CD8-positive, alpha-beta T cell (primary cell): ENCODE measurements at regions of chr15 and their contacts with region 1.

Region 1: GRCh38 chr15:50765195-50765973 is at the start of gene SPPL2A:
- DNase-seq: peak; percentile 50 to 90 (median 76)
- ATAC-seq: peak; percentile 91
- H3K4me3 ChIP-seq: peak within 1 kb of the TSS; percentile 69 to 77
- H3K4me3 Mint-ChIP-seq: peak within 1 kb of the TSS; percentile 90
- H3K27ac ChIP-seq: peak within 1 kb of the TSS; percentile 63 to 90
- H3K27ac Mint-ChIP-seq: peak within 1 kb of the TSS; percentile 92
- H3K4me1 ChIP-seq: peaks cover 20% of the 10 kb centered on the region
- H3K4me1 Mint-ChIP-seq: peaks cover 45% of the 10 kb centered on the region
- H3K27me3 ChIP-seq: no peaks in the 10 kb centered on the region
- H3K27me3 Mint-ChIP-seq: no peaks in the 10 kb centered on the region
- CTCF ChIP-seq: no peak
- total RNA-seq, gene SPPL2A: 33.4 to 36.8 TPM

Region 2: GRCh38 chr15:49927189-49927868 is 838.1 kb before region 1 on chr15:
- CTCF ChIA-PET with region 1: no interaction called
- POLR2A ChIA-PET with region 1: no interaction called
- intact Hi-C with region 1: no loop called
- DNase-seq: no peak
- ATAC-seq: no peak
- H3K4me3 ChIP-seq: no peak overlapping the region
- H3K4me3 Mint-ChIP-seq: no peak overlapping the region
- H3K27ac ChIP-seq: no peak overlapping the region
- H3K27ac Mint-ChIP-seq: no peak overlapping the region
- H3K4me1 ChIP-seq: no peaks in the 10 kb centered on the region
- H3K4me1 Mint-ChIP-seq: no peaks in the 10 kb centered on the region
- H3K27me3 ChIP-seq: no peaks in the 10 kb centered on the region
- H3K27me3 Mint-ChIP-seq: no peaks in the 10 kb centered on the region
- CTCF ChIP-seq: no peak

Region 3: DNA sequence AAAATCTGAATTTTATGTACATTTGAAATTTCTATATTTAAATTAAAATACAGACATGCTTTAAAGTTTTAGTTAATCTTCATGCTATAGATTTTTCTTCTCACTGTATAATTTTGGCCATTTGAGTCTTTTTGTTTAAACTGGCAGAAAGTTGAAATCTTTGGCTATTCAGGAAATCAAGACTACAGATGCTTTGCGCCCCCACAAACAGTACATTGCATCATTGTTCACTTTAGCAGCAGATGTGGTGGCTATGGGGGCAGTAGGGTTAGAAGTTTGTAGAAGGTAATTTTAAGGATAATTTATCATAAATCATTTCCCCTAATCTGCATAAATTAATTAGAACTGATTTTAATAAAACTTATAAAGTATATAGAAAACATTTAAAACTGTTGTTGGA is 20.8 kb before region 1 on chr15:
- CTCF ChIA-PET with region 1: interaction called, 3 read pairs
- POLR2A ChIA-PET with region 1: no interaction called
- intact Hi-C with region 1: loop called in 1 of 2 experiments (anchors 1 kb)
- DNase-seq: no peak
- ATAC-seq: no peak
- H3K4me3 ChIP-seq: no peak overlapping the region
- H3K4me3 Mint-ChIP-seq: no peak overlapping the region
- H3K27ac ChIP-seq: no peak overlapping the region
- H3K27ac Mint-ChIP-seq: no peak overlapping the region
- H3K4me1 ChIP-seq: no peaks in the 10 kb centered on the region
- H3K4me1 Mint-ChIP-seq: no peaks in the 10 kb centered on the region
- H3K27me3 ChIP-seq: no peaks in the 10 kb centered on the region
- H3K27me3 Mint-ChIP-seq: no peaks in the 10 kb centered on the region
- CTCF ChIP-seq: no peak

Region 4: DNA sequence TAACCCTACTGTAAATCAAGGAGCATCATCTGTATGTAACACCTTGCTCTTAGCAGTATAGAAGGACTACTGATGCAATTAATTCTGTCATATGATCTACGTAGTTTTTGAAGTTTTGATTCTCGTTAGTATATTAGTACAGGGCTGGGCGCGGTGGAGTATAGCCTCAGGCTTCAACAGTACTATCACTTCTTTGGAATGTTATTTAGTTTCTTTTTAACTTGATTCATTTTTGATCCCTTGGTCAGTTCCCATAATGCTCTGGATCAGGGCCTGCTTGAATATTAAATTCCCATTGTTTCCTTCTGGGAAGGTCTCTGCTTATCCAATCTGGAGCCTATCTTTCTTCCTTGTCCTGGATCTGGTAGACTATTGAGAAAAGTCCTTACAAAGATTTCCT is 119.2 kb after region 1 on chr15:
- CTCF ChIA-PET with region 1: no interaction called
- POLR2A ChIA-PET with region 1: no interaction called
- intact Hi-C with region 1: loop called (anchors 5 kb)
- DNase-seq: no peak
- ATAC-seq: no peak
- H3K4me3 ChIP-seq: no peak overlapping the region
- H3K4me3 Mint-ChIP-seq: no peak overlapping the region
- H3K27ac ChIP-seq: no peak overlapping the region
- H3K27ac Mint-ChIP-seq: no peak overlapping the region
- H3K4me1 ChIP-seq: peaks cover 5% of the 10 kb centered on the region
- H3K4me1 Mint-ChIP-seq: peaks cover 9% of the 10 kb centered on the region
- H3K27me3 ChIP-seq: no peaks in the 10 kb centered on the region
- H3K27me3 Mint-ChIP-seq: no peaks in the 10 kb centered on the region
- CTCF ChIP-seq: no peak